HCT116 (cell line): ENCODE measurements at regions of chr2 and their contacts with region 1.

Region 1: DNA sequence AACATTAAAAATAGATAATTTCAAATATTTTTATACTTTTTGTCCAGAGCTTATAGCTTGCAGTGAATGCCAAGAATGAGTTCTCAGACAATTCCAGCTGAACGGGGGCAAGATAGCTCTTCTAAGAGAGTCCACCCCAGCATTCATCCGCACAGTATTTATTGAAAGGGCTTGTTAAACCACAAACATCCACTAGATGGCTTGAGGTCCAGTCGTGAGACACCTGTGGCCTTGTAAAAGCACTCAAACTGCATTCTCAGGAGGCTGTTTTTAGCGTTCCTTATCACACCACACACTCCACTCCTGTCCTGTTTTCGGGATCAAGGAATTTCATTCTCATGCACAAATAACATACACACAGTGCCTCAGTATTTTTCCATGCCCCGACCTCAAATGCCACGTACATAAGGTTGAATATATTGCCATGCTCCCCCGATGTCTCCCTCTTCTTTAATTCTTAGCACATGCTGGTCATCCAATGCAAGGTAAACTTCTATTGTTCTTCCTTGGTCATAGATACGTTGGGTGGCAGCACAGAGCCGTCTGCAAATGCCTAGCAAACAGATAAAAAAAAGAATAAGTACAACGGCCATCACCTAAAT is 47.4 kb downstream of the DNAJC10 start:
- DNase-seq: peak; percentile 18
- ATAC-seq: peak; percentile 82
- H3K4me3 ChIP-seq: no peak overlapping the region
- H3K27ac ChIP-seq: no peak overlapping the region
- H3K4me1 ChIP-seq: no peaks in the 10 kb centered on the region
- H3K27me3 ChIP-seq: no peaks in the 10 kb centered on the region
- CTCF ChIP-seq: peak; percentile 18 to 53 (median 47); a peak in 5 of 6 replicates
- POLR2A ChIP-seq: no peak
- RAD21 ChIP-seq: no peak; the same call in 1 of the 2 replicates

Region 2: DNA sequence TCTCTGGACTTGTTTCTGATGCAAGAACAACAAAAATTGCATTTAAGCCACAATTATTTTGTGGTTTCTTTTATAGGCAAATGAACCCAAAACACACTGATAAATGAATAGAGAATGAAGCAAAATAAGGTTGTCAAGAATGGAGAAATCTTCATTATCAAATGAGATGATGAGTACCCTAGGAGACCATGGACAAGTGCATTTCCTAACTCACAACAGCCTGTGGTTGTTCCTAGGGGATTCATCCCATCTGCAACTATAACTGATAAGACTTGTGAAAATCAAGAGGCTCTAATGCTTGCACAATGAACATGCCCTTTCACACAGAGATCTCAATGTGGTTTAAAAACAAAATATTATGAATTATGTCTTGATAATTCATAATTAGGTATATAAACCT is 496.5 kb before region 1 on chr2:
- CTCF ChIA-PET with region 1: no interaction called
- POLR2A ChIA-PET with region 1: no interaction called
- RAD21 ChIA-PET with region 1: no interaction called
- intact Hi-C with region 1: no loop called
- DNase-seq: no peak
- ATAC-seq: no peak
- H3K4me3 ChIP-seq: no peak overlapping the region
- H3K27ac ChIP-seq: no peak overlapping the region
- H3K4me1 ChIP-seq: no peaks in the 10 kb centered on the region
- H3K27me3 ChIP-seq: no peaks in the 10 kb centered on the region
- CTCF ChIP-seq: no peak
- POLR2A ChIP-seq: no peak
- RAD21 ChIP-seq: no peak

Region 3: GRCh38 chr2:182779323-182779722 is 15.9 kb after region 1 on chr2:
- CTCF ChIA-PET with region 1: interaction called, 10 read pairs
- POLR2A ChIA-PET with region 1: no interaction called
- RAD21 ChIA-PET with region 1: no interaction called
- intact Hi-C with region 1: no loop called
- DNase-seq: no peak
- ATAC-seq: no peak
- H3K4me3 ChIP-seq: no peak overlapping the region
- H3K27ac ChIP-seq: no peak overlapping the region
- H3K4me1 ChIP-seq: no peaks in the 10 kb centered on the region
- H3K27me3 ChIP-seq: no peaks in the 10 kb centered on the region
- CTCF ChIP-seq: no peak
- POLR2A ChIP-seq: no peak
- RAD21 ChIP-seq: no peak

Region 4: GRCh38 chr2:183093857-183094657 is 330.6 kb after region 1 on chr2:
- CTCF ChIA-PET with region 1: interaction called, 3 read pairs
- POLR2A ChIA-PET with region 1: no interaction called
- RAD21 ChIA-PET with region 1: no interaction called
- intact Hi-C with region 1: loop called (anchors 10 kb)
- DNase-seq: no peak
- ATAC-seq: 0 out of 2 replicates have a peak, but pooled peaks have one; percentile 53
- H3K4me3 ChIP-seq: no peak overlapping the region
- H3K27ac ChIP-seq: no peak overlapping the region
- H3K4me1 ChIP-seq: no peaks in the 10 kb centered on the region
- H3K27me3 ChIP-seq: no peaks in the 10 kb centered on the region
- CTCF ChIP-seq: peak in 1 of 3 experiments; percentile 23; a peak in 2 of 6 replicates
- POLR2A ChIP-seq: no peak
- RAD21 ChIP-seq: peak; percentile 47